HepG2 (cell line): ENCODE measurements at regions of chr19 and their contacts with region 1.

Region 1: DNA sequence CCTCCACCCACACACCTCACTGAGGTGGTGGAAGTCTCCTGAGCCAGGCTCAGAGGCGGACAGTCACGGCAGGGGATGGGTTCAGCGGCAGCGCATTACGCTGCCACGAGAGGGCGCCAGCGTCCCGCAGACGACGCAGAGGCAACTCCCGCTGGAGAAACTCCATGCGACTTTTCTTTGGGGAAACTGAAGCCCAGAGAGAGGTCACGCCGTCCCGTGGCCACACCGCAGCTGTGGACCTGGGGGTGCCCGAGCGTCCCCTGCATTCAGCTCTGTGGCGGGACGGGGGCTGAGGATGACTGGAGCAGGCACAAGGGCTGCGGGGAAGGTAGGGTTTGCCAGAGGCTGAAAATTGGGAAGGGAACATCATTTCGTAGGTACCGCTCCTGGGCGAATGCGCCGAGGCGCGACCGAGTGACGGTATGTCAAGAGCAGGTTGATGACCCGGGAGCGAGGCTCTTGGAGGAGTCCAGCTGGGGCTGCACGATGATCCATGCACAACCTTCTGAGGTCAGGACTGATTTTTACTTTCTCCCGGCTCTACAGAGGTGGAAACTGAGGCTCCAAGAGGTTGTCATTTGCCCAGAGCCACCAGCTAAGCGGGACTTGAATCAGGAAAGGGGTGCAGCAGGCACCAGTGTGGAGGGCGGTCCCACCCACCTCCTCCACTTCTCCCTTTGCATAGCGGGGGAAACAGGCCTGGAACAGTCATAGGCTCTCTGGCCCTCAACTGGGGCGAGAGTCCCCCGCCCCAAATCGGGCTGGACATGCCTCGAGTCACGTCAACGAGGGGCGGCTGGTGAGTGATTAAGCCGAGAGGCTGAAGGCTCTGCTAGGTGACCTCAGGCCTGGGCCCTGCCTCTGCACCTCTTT is 690 bp upstream of the ARRDC2 start:
- DNase-seq: peak; percentile 46
- ATAC-seq: peak; percentile 88
- H3K4me3 ChIP-seq: peak overlapping the region; percentile 36 to 52 (median 40); a peak in 5 of 6 replicates
- H3K27ac ChIP-seq: no peak overlapping the region
- H3K4me1 ChIP-seq: peaks cover 31% of the 10 kb centered on the region
- H3K27me3 ChIP-seq: no peaks in the 10 kb centered on the region
- CTCF ChIP-seq: peak; percentile 99
- EP300 ChIP-seq: no peak
- POLR2A ChIP-seq: no peak
- RAD21 ChIP-seq: peak; percentile 99

Region 2: GRCh38 chr19:18058208-18059030 is 51.1 kb after region 1 on chr19:
- CTCF ChIA-PET with region 1: interaction called, 85 read pairs
- POLR2A ChIA-PET with region 1: interaction called, 3 read pairs
- in situ Hi-C with region 1: loop called (anchors 5 kb)
- intact Hi-C with region 1: loop called (anchors 1 kb)
- DNase-seq: peak; percentile 47
- ATAC-seq: peak; percentile 85
- H3K4me3 ChIP-seq: peak overlapping the region in 1 of 3 experiments; percentile 60; a peak in 2 of 6 replicates
- H3K27ac ChIP-seq: no peak overlapping the region
- H3K4me1 ChIP-seq: peaks cover 17% of the 10 kb centered on the region
- H3K27me3 ChIP-seq: peaks cover 0 to 6% of the 10 kb centered on the region in 2 experiments; a peak in 2 of 5 replicates
- CTCF ChIP-seq: peak; percentile 97
- EP300 ChIP-seq: no peak
- POLR2A ChIP-seq: no peak
- RAD21 ChIP-seq: peak; percentile 95

Region 3: DNA sequence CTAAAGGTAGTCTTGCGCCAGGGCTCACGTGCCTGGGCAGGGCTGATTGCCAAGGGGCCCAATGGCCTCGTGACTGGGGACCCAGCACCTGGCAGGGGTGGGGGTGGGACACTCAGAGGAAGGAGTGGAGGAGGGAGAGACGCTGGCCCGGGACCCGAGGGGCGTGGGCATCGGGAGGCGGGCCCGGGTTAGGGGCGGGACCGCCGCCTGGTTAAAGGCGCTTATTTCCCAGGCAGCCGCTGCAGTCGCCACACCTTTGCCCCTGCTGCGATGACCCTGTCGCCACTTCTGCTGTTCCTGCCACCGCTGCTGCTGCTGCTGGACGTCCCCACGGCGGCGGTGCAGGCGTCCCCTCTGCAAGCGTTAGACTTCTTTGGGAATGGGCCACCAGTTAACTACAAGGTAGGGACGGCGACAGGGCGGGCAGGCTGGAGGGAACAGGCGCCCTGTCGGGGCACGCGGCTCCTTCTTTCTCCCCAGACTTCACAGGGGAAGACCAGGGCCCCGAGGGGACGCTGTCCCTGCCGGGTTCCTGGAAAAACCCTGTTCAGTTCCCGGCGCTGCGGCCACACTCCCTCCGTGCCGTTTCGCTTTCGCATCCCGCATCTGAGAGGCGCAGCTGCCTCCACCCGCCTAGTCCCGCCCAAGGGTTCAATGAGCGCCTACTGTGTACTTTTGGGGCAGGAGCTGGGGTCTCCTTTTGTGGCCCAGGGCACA is 166.4 kb after region 1 on chr19 and contains the start of gene IFI30:
- CTCF ChIA-PET with region 1: no interaction called
- POLR2A ChIA-PET with region 1: no interaction called
- in situ Hi-C with region 1: loop called (anchors 10 kb)
- intact Hi-C with region 1: no loop called
- DNase-seq: peak; percentile 68
- ATAC-seq: peak; percentile 85
- H3K4me3 ChIP-seq: peak within 1 kb of the TSS; percentile 59 to 80 (median 69)
- H3K27ac ChIP-seq: peak within 1 kb of the TSS; percentile 62
- H3K4me1 ChIP-seq: peaks cover 14% of the 10 kb centered on the region
- H3K27me3 ChIP-seq: no peaks in the 10 kb centered on the region
- CTCF ChIP-seq: peak; percentile 34
- EP300 ChIP-seq: no peak; a peak in 1 of 4 replicates
- POLR2A ChIP-seq: peak; percentile 86 to 97
- RAD21 ChIP-seq: 0 out of 2 replicates have a peak, but pooled peaks have one; percentile 35
- total RNA-seq, gene IFI30: 41.2 and 79.4 TPM in 2 replicates